CD8-positive, alpha-beta T cell (primary cell): ENCODE measurements at regions of chr3 and their contacts with region 1.

Region 1: DNA sequence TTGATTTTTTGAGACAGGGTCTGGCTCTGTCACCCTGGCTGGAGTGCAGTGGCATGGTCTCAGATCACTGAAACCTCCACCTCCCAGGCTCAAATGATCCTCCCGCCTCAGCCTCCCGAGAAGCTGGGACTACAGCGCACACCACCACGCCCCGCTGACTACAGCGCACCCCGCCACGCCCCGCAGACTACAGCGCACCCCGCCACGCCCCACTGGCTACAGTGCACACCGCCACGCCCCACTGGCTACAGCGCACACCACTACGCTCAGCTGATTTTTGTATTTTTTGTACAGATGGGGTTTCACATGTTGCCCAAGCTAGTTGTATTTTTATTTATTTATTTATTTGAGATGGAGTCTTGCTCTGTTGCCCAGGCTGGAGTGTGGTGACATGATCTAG is 35.6 kb downstream of the SLC51A start:
- DNase-seq: no peak
- ATAC-seq: no peak
- H3K4me3 ChIP-seq: no peak overlapping the region
- H3K4me3 Mint-ChIP-seq: no peak overlapping the region
- H3K27ac ChIP-seq: no peak overlapping the region
- H3K27ac Mint-ChIP-seq: no peak overlapping the region
- H3K4me1 ChIP-seq: no peaks in the 10 kb centered on the region
- H3K4me1 Mint-ChIP-seq: peaks cover 4% of the 10 kb centered on the region
- H3K27me3 ChIP-seq: no peaks in the 10 kb centered on the region
- H3K27me3 Mint-ChIP-seq: no peaks in the 10 kb centered on the region
- CTCF ChIP-seq: no peak

Region 2: DNA sequence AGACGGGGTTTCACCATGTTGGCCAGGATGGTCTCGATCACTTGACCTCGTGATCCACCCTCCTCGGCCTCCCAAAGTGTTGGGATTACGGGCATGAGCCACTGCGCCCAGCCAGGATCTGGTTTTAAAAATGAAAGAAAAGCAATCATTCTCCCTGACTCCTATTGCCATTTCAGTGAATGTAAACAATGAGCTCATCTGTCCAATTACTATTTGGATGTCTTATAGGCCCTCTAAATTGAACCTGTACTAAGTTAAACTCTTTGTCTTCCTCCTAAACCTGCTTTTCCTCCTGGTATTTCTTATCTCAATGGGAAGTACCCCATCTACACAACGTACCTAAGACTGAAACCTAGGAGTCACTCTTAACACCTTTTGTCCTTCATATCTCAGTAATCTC is 11.9 kb after region 1 on chr3:
- CTCF ChIA-PET with region 1: interaction called, 10 read pairs
- POLR2A ChIA-PET with region 1: no interaction called
- intact Hi-C with region 1: no loop called
- DNase-seq: no peak
- ATAC-seq: no peak
- H3K4me3 ChIP-seq: no peak overlapping the region
- H3K4me3 Mint-ChIP-seq: no peak overlapping the region
- H3K27ac ChIP-seq: no peak overlapping the region
- H3K27ac Mint-ChIP-seq: no peak overlapping the region
- H3K4me1 ChIP-seq: no peaks in the 10 kb centered on the region
- H3K4me1 Mint-ChIP-seq: peaks cover 2% of the 10 kb centered on the region
- H3K27me3 ChIP-seq: no peaks in the 10 kb centered on the region
- H3K27me3 Mint-ChIP-seq: no peaks in the 10 kb centered on the region
- CTCF ChIP-seq: no peak

Region 3: DNA sequence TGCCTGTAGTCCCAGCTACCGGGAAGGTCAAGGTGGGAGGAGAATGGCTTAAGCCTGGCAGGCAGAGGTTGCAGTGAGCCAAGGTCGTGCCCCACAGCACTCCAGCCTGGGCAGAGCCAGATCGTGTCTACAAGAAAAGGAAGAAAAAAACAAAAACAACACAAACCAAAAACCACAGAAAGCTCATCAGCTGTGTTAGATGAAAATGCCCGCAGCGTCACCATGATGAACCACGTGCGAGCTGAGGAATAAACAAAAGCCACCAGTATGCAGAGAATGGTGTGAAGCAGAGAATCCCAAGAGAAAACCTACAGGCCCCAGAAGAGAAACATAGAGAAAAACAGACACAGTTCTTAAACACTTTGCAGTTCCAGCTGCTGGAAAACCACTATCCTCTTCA is 106.0 kb after region 1 on chr3:
- CTCF ChIA-PET with region 1: no interaction called
- POLR2A ChIA-PET with region 1: no interaction called
- intact Hi-C with region 1: loop called in 1 of 2 experiments (anchors 10 kb)
- DNase-seq: peak in 4 of 9 experiments; percentile 2 to 69 (median 40)
- ATAC-seq: no peak
- H3K4me3 ChIP-seq: no peak overlapping the region
- H3K4me3 Mint-ChIP-seq: no peak overlapping the region
- H3K27ac ChIP-seq: no peak overlapping the region
- H3K27ac Mint-ChIP-seq: peak overlapping the region; percentile 73
- H3K4me1 ChIP-seq: no peaks in the 10 kb centered on the region
- H3K4me1 Mint-ChIP-seq: peaks cover 12% of the 10 kb centered on the region
- H3K27me3 ChIP-seq: no peaks in the 10 kb centered on the region
- H3K27me3 Mint-ChIP-seq: no peaks in the 10 kb centered on the region
- CTCF ChIP-seq: no peak

Region 4: GRCh38 chr3:196518966-196519717 is 267.2 kb after region 1 on chr3:
- CTCF ChIA-PET with region 1: interaction called, 16 read pairs
- POLR2A ChIA-PET with region 1: interaction called, 3 read pairs
- intact Hi-C with region 1: loop called (anchors 1 kb)
- DNase-seq: peak in 8 of 9 experiments; percentile 15 to 75 (median 62)
- ATAC-seq: no peak
- H3K4me3 ChIP-seq: peak overlapping the region in 1 of 2 experiments; percentile 1
- H3K4me3 Mint-ChIP-seq: no peak overlapping the region
- H3K27ac ChIP-seq: no peak overlapping the region
- H3K27ac Mint-ChIP-seq: no peak overlapping the region
- H3K4me1 ChIP-seq: no peaks in the 10 kb centered on the region
- H3K4me1 Mint-ChIP-seq: no peaks in the 10 kb centered on the region
- H3K27me3 ChIP-seq: no peaks in the 10 kb centered on the region
- H3K27me3 Mint-ChIP-seq: no peaks in the 10 kb centered on the region
- CTCF ChIP-seq: peak; percentile 28

Region 5: DNA sequence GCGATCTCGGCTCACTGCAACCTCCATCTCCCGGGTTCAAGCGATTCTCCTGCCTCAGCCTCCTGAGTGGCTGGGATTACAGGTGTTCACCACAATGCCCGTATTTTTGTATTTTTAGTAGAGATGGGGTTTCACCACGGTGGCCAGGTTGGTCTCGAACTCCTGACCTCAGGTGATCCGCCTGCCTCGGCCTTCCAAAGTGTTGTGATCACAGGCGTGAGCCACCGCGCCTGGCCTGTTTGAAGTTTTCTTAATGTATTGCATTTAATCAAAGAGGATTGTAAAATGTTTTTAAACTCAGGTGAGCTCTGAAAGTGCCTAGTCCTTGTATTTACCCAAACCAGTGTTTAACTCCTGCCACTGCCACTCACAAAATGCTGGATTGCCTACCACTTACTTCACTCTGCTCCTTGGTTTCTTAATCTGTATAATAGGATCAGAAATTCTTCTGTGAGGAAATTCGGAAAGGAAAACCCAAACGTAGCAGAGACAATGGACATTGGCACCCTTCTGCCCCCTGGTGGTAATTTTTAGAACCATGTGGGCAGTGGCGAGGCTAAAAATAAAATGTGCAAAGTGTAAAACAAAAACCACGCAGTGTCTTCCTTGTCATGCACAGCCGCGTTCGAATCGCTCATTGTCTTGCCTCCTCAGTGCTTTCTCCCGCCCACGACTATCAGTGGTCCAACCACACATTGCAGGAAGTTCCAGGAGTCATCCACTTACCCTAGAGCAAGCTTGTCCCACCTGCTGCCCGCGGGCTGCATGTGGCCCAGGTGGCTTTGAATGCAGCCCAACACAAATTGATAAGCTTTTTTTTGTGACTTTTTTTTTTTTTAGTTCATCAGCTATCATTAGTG is 432.9 kb after region 1 on chr3:
- CTCF ChIA-PET with region 1: no interaction called
- POLR2A ChIA-PET with region 1: no interaction called
- intact Hi-C with region 1: loop called in 1 of 2 experiments (anchors 2 kb)
- DNase-seq: peak; percentile 30 to 83 (median 68)
- ATAC-seq: peak; percentile 82
- H3K4me3 ChIP-seq: peak overlapping the region; percentile 11 to 37
- H3K4me3 Mint-ChIP-seq: peak overlapping the region; percentile 67
- H3K27ac ChIP-seq: peak overlapping the region in 1 of 2 experiments; percentile 61
- H3K27ac Mint-ChIP-seq: peak overlapping the region; percentile 34
- H3K4me1 ChIP-seq: peaks cover 13% of the 10 kb centered on the region
- H3K4me1 Mint-ChIP-seq: peaks cover 10% of the 10 kb centered on the region
- H3K27me3 ChIP-seq: no peaks in the 10 kb centered on the region
- H3K27me3 Mint-ChIP-seq: no peaks in the 10 kb centered on the region
- CTCF ChIP-seq: peak; percentile 95